Activated CD4-positive, alpha-beta memory T cell treated with anti-CD3 and anti-CD28 coated beads, Interleukin-2, amount 10 ng/mL, durations not matched to agents 7 days and 5 days (primary cell): ENCODE measurements at regions of chr15 and their contacts with region 1.

Region 1: GRCh38 chr15:57706405-57707209 is at the start of gene POLR2M:
- DNase-seq: peak; percentile 92
- H3K4me3 Mint-ChIP-seq: peak within 1 kb of the TSS; percentile 92
- H3K27ac Mint-ChIP-seq: peak within 1 kb of the TSS; percentile 77
- H3K4me1 Mint-ChIP-seq: peaks cover 73% of the 10 kb centered on the region
- H3K27me3 Mint-ChIP-seq: no peaks in the 10 kb centered on the region
- total RNA-seq, gene POLR2M: 70.6 to 71.0 TPM

Region 2: DNA sequence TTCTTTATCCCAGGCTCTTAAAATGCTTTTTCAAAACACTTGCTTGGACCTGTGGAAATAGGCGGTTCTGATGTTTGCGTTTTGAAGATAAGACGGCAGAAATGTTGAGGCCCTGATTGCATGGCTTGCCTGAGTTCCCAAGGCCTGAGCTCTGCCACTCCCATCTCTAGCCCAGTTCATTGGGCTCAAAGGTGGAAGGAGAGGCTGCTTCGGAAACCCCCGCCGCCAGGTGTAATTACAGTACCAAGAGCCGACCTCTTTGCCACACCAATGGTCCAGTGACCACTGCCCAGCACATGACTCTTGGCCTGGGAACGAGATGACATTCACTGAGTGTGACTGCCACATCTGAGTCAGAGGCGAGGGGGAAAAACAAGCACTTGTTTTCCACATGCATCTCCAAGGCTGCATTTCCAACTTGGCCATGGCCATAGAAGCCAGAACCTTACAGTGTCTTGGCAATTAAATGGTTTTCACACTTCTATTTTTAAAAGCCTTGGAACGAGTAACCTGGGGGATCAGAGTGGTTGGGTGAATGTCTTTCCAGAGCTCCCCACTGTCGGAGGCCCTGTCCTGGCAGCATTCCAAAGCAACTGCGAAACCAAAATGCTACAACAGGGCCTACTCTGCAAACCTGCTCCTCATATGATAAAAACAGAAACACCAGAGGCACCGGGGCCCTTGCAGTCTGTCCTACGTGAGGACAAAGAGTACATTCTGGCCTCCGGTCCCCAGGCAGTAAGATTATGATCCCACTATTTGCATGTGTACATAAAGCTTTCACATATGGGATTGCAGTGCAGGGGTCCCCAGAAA is 394.1 kb before region 1 on chr15:
- CTCF ChIA-PET with region 1: no interaction called
- POLR2A ChIA-PET with region 1: no interaction called
- DNase-seq: no peak
- H3K4me3 Mint-ChIP-seq: no peak overlapping the region
- H3K27ac Mint-ChIP-seq: no peak overlapping the region
- H3K4me1 Mint-ChIP-seq: no peaks in the 10 kb centered on the region
- H3K27me3 Mint-ChIP-seq: no peaks in the 10 kb centered on the region

Region 3: DNA sequence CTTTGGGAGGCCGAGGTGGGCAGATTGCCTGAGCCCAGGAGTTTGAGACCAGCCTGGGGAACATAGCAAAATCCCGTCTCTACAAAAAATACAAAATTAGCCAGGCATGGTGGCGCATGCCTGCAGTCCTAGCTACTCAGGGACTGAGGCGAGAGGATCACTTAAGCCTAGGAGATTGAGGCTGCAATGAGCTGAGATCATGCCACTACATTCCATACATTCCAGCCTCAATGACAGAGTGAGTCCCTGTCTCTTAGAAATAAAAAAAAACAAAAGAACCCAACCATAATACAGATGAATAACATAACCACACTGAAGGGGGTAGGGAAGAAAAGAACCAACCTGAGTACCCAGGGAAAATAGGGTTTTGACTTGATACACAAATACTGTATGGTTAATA is 350.0 kb before region 1 on chr15:
- CTCF ChIA-PET with region 1: no interaction called
- POLR2A ChIA-PET with region 1: no interaction called
- DNase-seq: no peak
- H3K4me3 Mint-ChIP-seq: no peak overlapping the region
- H3K27ac Mint-ChIP-seq: no peak overlapping the region
- H3K4me1 Mint-ChIP-seq: no peaks in the 10 kb centered on the region
- H3K27me3 Mint-ChIP-seq: peaks cover 7% of the 10 kb centered on the region

Region 4: GRCh38 chr15:57561041-57561711 is 145.4 kb before region 1 on chr15:
- CTCF ChIA-PET with region 1: interaction called, 18 read pairs
- POLR2A ChIA-PET with region 1: no interaction called
- DNase-seq: peak; percentile 67
- H3K4me3 Mint-ChIP-seq: no peak overlapping the region
- H3K27ac Mint-ChIP-seq: no peak overlapping the region
- H3K4me1 Mint-ChIP-seq: peaks cover 38% of the 10 kb centered on the region
- H3K27me3 Mint-ChIP-seq: peaks cover 5% of the 10 kb centered on the region